ENCODE measurements at regions of chr19 and their contacts with region 1.

Region 1: GRCh38 chr19:53867225-53868090 is at the start of gene MYADM:
- DNase-seq: peak; percentile 99
- ATAC-seq: peak; percentile 83 to 92 (median 88)
- H3K4me3 ChIP-seq: peak within 1 kb of the TSS; percentile 67 to 96 (median 90)
- H3K27ac ChIP-seq: peak within 1 kb of the TSS; percentile 85 to 99 (median 94)
- H3K4me1 ChIP-seq: peaks cover 3 to 47% (median 24%) of the 10 kb centered on the region in 12 donors
- H3K27me3 ChIP-seq: no peaks in the 10 kb centered on the region
- CTCF ChIP-seq: no peak
- POLR2A ChIP-seq: peak; percentile 51 to 77
- total RNA-seq, gene MYADM: 99.0 to 201 (median 166) TPM

Region 2: GRCh38 chr19:54102421-54103169 is 235.1 kb after region 1 on chr19 and contains the start of gene NDUFA3:
- intact Hi-C with region 1: loop called in 2 of 10 experiments (anchors 5 to 10 kb)
- DNase-seq: peak; percentile 98 to 99 (median 99)
- ATAC-seq: peak; percentile 99 to 100 (median 99)
- H3K4me3 ChIP-seq: peak within 1 kb of the TSS; percentile 60 to 98 (median 88)
- H3K27ac ChIP-seq: peak within 1 kb of the TSS; percentile 25 to 91 (median 82)
- H3K4me1 ChIP-seq: peaks cover 3 to 18% (median 11%) of the 10 kb centered on the region in 12 donors
- H3K27me3 ChIP-seq: peaks cover 0 to 9% (median 0%) of the 10 kb centered on the region in 9 donors
- CTCF ChIP-seq: no peak
- POLR2A ChIP-seq: peak; percentile 36 to 87
- total RNA-seq, gene NDUFA3: 32.2 to 501 (median 299) TPM

Region 3: GRCh38 chr19:54189735-54190502 is 322.5 kb after region 1 on chr19:
- intact Hi-C with region 1: loop called in 1 of 10 experiments (anchors 5 kb)
- DNase-seq: peak; percentile 100
- ATAC-seq: peak; percentile 79 to 84 (median 82)
- H3K4me3 ChIP-seq: peak overlapping the region; percentile 68 to 92 (median 86)
- H3K27ac ChIP-seq: peak overlapping the region; percentile 88 to 100 (median 98)
- H3K4me1 ChIP-seq: peaks cover 0 to 23% (median 17%) of the 10 kb centered on the region in 12 donors
- H3K27me3 ChIP-seq: no peaks in the 10 kb centered on the region
- CTCF ChIP-seq: no peak
- POLR2A ChIP-seq: peak in 1 of 2 donors; percentile 44

Region 4: DNA sequence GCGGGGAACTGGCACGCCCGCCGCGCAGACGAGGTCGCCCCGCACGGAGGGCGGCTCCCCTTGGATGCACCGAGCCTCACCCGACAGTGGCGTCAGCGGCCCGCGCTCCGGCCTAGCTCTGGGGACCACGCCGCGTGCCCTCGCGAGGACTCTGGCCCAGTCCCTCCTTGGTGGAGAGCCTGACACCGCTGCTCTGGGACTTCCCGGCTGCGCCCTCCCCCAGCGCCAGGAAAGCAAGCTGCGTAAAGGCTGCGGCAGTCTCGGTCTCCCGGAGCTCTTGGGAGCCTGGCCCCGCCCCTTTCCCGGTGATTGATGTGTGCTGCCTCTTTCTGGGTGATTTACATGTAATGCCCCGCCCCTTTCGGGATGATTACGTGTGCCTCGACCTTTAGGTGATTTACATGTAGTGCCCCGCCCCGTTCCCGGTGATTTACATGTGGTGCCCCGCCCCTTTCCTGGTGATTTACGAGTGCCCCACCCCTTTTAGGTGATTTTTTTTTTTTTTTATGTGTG is 596.1 kb after region 1 on chr19 and contains the start of gene LENG9:
- intact Hi-C with region 1: loop called in 1 of 10 experiments (anchors 5 kb)
- DNase-seq: peak; percentile 97 to 99 (median 98)
- ATAC-seq: peak; percentile 71 to 85 (median 76)
- H3K4me3 ChIP-seq: peak within 1 kb of the TSS; percentile 40 to 78 (median 64)
- H3K27ac ChIP-seq: peak within 1 kb of the TSS; percentile 94 to 99 (median 98)
- H3K4me1 ChIP-seq: peaks cover 0 to 46% (median 30%) of the 10 kb centered on the region in 12 donors
- H3K27me3 ChIP-seq: peaks cover 0 to 8% (median 0%) of the 10 kb centered on the region in 9 donors
- CTCF ChIP-seq: no peak
- POLR2A ChIP-seq: peak in 1 of 2 donors; percentile 90
- total RNA-seq, gene LENG9: 1.5 to 4.1 (median 2.4) TPM

Measured in heart left ventricle (tissue), 16 donors.